Activated CD4-positive, alpha-beta memory T cell treated with anti-CD3 and anti-CD28 coated beads for 36 hours (primary cell): ENCODE measurements at regions of chr14 and their contacts with region 1.

Region 1: GRCh38 chr14:103576371-103577024 is 13.7 kb downstream of the COA8 start:
- DNase-seq: no peak
- H3K4me3 Mint-ChIP-seq: no peak overlapping the region
- H3K27ac Mint-ChIP-seq: no peak overlapping the region
- H3K4me1 Mint-ChIP-seq: no peaks in the 10 kb centered on the region
- H3K27me3 Mint-ChIP-seq: no peaks in the 10 kb centered on the region

Region 2: GRCh38 chr14:103679351-103679750 is 102.9 kb after region 1 on chr14:
- CTCF ChIA-PET with region 1: interaction called, 8 read pairs
- POLR2A ChIA-PET with region 1: no interaction called
- intact Hi-C with region 1: loop called (anchors 5 kb)
- DNase-seq: peak; percentile 54
- H3K4me3 Mint-ChIP-seq: no peak overlapping the region
- H3K27ac Mint-ChIP-seq: peak overlapping the region; percentile 11
- H3K4me1 Mint-ChIP-seq: no peaks in the 10 kb centered on the region
- H3K27me3 Mint-ChIP-seq: no peaks in the 10 kb centered on the region

Region 3: GRCh38 chr14:103748534-103748857 is 172.0 kb after region 1 on chr14:
- CTCF ChIA-PET with region 1: no interaction called
- POLR2A ChIA-PET with region 1: no interaction called
- intact Hi-C with region 1: loop called (anchors 1 kb)
- DNase-seq: peak; percentile 64
- H3K4me3 Mint-ChIP-seq: no peak overlapping the region
- H3K27ac Mint-ChIP-seq: no peak overlapping the region
- H3K4me1 Mint-ChIP-seq: peaks cover 8% of the 10 kb centered on the region
- H3K27me3 Mint-ChIP-seq: no peaks in the 10 kb centered on the region